ENCODE measurements at regions of chr5 and their contacts with region 1.

Region 1: GRCh38 chr5:56328753-56329560 is 95.8 kb upstream of the ANKRD55 start:
- DNase-seq: peak; percentile 72
- ATAC-seq: peak; percentile 72
- H3K4me3 Mint-ChIP-seq: peak overlapping the region; percentile 41
- H3K27ac Mint-ChIP-seq: peak overlapping the region; percentile 94
- H3K4me1 Mint-ChIP-seq: peaks cover 56% of the 10 kb centered on the region
- H3K27me3 Mint-ChIP-seq: no peaks in the 10 kb centered on the region
- CTCF ChIP-seq: no peak

Region 2: DNA sequence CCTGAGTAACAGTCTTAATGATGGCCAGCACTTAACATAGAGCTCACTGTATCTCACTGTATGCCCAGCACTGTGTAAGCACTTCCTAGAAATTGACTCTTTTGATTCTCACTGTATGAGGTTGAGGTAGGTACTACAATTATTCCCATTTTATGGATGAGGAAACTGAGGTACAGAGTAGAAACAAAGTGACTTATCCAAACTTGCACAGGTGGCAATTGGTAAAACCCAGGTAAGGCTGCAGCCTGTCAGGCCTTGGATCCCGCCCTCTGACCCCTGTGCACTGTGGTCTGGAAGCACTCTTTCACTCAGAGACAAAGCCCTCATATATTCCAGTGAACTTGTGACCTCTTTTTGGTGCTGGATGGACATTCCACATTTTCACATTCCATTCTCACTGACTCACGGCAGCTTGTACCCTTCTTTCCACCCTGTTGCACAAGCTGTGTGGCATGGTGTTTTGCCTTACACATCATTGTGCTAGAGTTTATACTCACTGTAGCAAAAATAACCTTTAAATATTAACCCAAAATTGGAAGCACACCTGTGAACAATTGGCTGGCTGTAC is 117.6 kb before region 1 on chr5:
- CTCF ChIA-PET with region 1: no interaction called
- POLR2A ChIA-PET with region 1: no interaction called
- intact Hi-C with region 1: no loop called
- DNase-seq: no peak
- ATAC-seq: no peak
- H3K4me3 Mint-ChIP-seq: no peak overlapping the region
- H3K27ac Mint-ChIP-seq: no peak overlapping the region
- H3K4me1 Mint-ChIP-seq: no peaks in the 10 kb centered on the region
- H3K27me3 Mint-ChIP-seq: no peaks in the 10 kb centered on the region
- CTCF ChIP-seq: no peak

Region 3: GRCh38 chr5:56457887-56458812 is 129.2 kb after region 1 on chr5:
- CTCF ChIA-PET with region 1: no interaction called
- POLR2A ChIA-PET with region 1: no interaction called
- intact Hi-C with region 1: no loop called
- DNase-seq: no peak
- ATAC-seq: no peak
- H3K4me3 Mint-ChIP-seq: no peak overlapping the region
- H3K27ac Mint-ChIP-seq: no peak overlapping the region
- H3K4me1 Mint-ChIP-seq: no peaks in the 10 kb centered on the region
- H3K27me3 Mint-ChIP-seq: no peaks in the 10 kb centered on the region
- CTCF ChIP-seq: no peak

Region 4: GRCh38 chr5:56814963-56815658 is 486.2 kb after region 1 on chr5 and contains the start of gene MAP3K1:
- CTCF ChIA-PET with region 1: no interaction called
- POLR2A ChIA-PET with region 1: no interaction called
- intact Hi-C with region 1: loop called (anchors 5 kb)
- DNase-seq: peak; percentile 73
- ATAC-seq: peak; percentile 72
- H3K4me3 Mint-ChIP-seq: peak within 1 kb of the TSS; percentile 87
- H3K27ac Mint-ChIP-seq: peak within 1 kb of the TSS; percentile 92
- H3K4me1 Mint-ChIP-seq: peaks cover 39% of the 10 kb centered on the region
- H3K27me3 Mint-ChIP-seq: peaks cover 5% of the 10 kb centered on the region
- CTCF ChIP-seq: no peak
- total RNA-seq, gene MAP3K1: 16.9 to 17.0 TPM